Left lung (tissue), 14 donors: ENCODE measurements at regions of chr17 and their contacts with region 1.

Region 1: DNA sequence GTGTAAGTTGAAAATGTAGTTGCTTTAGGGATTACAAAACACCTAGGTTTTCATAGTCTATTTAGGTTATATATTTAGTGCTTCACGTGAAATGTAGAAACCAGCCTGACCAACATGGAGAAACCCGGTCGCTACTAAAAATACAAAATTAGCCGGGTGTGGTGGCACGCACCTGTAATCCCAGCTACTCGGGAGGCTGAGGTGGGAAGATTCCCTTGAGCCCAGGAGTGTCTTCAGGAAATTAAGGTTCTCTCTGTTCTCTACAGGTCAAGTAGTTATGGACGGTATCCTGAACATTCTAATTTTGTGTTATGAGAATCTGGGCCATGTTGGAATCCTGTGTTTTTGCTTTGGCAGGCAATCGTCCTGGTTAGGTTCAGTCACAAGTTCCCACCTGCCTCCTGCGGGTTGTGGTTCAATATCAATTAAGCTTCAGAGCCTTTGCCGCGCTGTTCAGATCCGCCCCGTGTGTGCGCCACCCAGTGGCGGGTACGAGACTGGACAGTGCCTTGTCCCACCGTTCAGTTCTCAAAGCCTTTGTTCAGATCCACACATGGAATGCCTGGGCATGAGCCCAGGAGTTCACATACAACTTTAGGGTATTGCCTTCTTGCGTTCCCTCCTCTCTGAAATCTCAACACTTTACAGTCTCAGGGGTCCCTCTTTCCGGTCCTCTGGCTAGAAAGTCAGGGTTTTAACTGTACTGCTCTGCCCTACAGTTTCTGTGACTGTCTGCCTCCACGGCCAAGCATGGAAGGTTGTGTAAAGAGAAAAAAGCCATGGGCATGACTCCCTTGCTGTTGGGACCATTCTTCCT is 41.7 kb downstream of the HEATR6 start:
- DNase-seq: peak; percentile 49 to 91 (median 66)
- ATAC-seq: peak; percentile 94
- H3K4me3 ChIP-seq: no peak overlapping the region
- H3K27ac ChIP-seq: no peak overlapping the region
- H3K4me1 ChIP-seq: no peaks in the 10 kb centered on the region
- H3K27me3 ChIP-seq: peaks cover 0 to 24% of the 10 kb centered on the region in 2 donors
- CTCF ChIP-seq: peak; percentile 78 to 91

Region 2: GRCh38 chr17:59914274-59914854 is 122.6 kb before region 1 on chr17:
- intact Hi-C with region 1: loop called in 1 of 2 experiments (anchors 10 kb)
- DNase-seq: peak in 2 of 4 donors; percentile 31 to 55
- ATAC-seq: peak; percentile 73
- H3K4me3 ChIP-seq: no peak overlapping the region
- H3K27ac ChIP-seq: no peak overlapping the region
- H3K4me1 ChIP-seq: no peaks in the 10 kb centered on the region
- H3K27me3 ChIP-seq: no peaks in the 10 kb centered on the region
- CTCF ChIP-seq: peak; percentile 49 to 61

Region 3: DNA sequence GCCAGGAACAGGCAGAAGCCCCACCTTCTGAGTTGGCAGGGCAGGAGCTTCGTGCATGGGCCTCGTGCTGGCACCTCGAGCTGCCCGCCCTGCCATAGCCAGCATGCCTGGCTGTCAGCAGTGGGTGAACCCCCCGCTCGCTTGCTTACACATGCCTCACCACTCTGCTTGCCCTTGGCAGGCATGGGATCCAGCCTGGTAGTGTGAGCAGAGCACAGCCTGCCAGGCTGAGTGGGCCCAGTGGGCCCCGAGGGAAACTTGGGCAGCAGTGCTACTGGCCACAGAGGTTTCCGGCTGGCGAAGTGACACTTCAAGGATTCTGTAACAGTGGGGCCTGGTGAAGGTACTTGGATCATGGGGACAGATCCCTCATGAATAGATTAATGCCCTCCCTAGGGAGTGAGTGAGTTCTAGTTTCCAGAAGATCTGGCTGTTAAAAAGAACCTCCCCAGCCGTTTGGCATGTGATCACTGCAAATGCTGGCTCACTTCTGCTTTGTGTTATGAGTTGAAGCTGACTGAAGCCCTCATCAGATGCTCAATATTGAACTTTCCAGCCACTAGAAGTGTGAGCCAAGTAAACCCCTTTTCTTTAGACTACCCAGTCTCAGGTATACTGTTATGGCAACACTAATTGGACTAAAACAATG is 755.4 kb after region 1 on chr17:
- intact Hi-C with region 1: no loop called
- DNase-seq: no peak
- ATAC-seq: no peak
- H3K4me3 ChIP-seq: no peak overlapping the region
- H3K27ac ChIP-seq: no peak overlapping the region
- H3K4me1 ChIP-seq: no peaks in the 10 kb centered on the region
- H3K27me3 ChIP-seq: no peaks in the 10 kb centered on the region
- CTCF ChIP-seq: no peak